ENCODE measurements at regions of chr16 and their contacts with region 1.

Region 1: GRCh38 chr16:67641779-67642708 is 2.9 kb upstream of the CARMIL2 start:
- DNase-seq: no peak
- ATAC-seq: no peak
- H3K4me3 Mint-ChIP-seq: no peak overlapping the region
- H3K27ac Mint-ChIP-seq: no peak overlapping the region
- H3K4me1 Mint-ChIP-seq: peaks cover 19% of the 10 kb centered on the region
- H3K27me3 Mint-ChIP-seq: no peaks in the 10 kb centered on the region

Region 2: GRCh38 chr16:67499106-67499505 is 142.9 kb before region 1 on chr16:
- CTCF ChIA-PET with region 1: interaction called, 10 read pairs
- POLR2A ChIA-PET with region 1: no interaction called
- DNase-seq: no peak
- ATAC-seq: no peak
- H3K4me3 Mint-ChIP-seq: no peak overlapping the region
- H3K27ac Mint-ChIP-seq: peak overlapping the region; percentile 34
- H3K4me1 Mint-ChIP-seq: peaks cover 13% of the 10 kb centered on the region
- H3K27me3 Mint-ChIP-seq: no peaks in the 10 kb centered on the region

Region 3: GRCh38 chr16:67555795-67556212 is 86.2 kb before region 1 on chr16:
- CTCF ChIA-PET with region 1: interaction called, 123 read pairs
- POLR2A ChIA-PET with region 1: interaction called, 51 read pairs
- DNase-seq: peak; percentile 52
- ATAC-seq: peak; percentile 91
- H3K4me3 Mint-ChIP-seq: peak overlapping the region; percentile 61
- H3K27ac Mint-ChIP-seq: peak overlapping the region; percentile 99
- H3K4me1 Mint-ChIP-seq: peaks cover 60% of the 10 kb centered on the region
- H3K27me3 Mint-ChIP-seq: no peaks in the 10 kb centered on the region

Region 4: DNA sequence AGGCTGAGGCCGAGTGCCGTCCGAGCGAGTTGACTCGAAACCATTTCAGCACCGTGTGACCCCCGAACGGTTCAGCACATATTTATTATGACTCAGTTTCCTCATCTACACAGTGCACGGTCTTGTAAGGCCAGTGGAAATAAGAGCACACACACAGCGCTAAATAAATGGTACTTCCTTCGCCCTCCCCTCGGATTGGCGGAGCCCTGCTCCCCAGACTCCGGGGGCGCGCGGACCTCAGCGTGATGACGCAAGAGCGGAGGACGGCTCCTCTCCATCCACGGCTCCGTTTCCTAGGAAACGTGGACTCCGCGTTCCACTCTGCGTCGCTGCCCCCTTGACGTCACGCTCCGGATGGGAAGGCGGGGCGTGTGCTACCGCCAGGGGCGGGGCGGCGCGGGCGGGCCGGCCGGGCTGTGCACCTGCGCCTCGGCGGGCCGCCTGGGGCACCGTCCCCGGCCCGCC is 18.6 kb after region 1 on chr16 and contains the start of gene PARD6A:
- CTCF ChIA-PET with region 1: interaction called, 30 read pairs
- POLR2A ChIA-PET with region 1: interaction called, 71 read pairs
- DNase-seq: peak; percentile 98
- ATAC-seq: peak; percentile 78
- H3K4me3 Mint-ChIP-seq: peak within 1 kb of the TSS; percentile 89
- H3K27ac Mint-ChIP-seq: peak within 1 kb of the TSS; percentile 96
- H3K4me1 Mint-ChIP-seq: peaks cover 31% of the 10 kb centered on the region
- H3K27me3 Mint-ChIP-seq: no peaks in the 10 kb centered on the region
- total RNA-seq, gene PARD6A: 13.2 to 14.7 TPM

Region 5: GRCh38 chr16:67736858-67737257 is 94.8 kb after region 1 on chr16:
- CTCF ChIA-PET with region 1: no interaction called
- POLR2A ChIA-PET with region 1: no interaction called
- DNase-seq: no peak
- ATAC-seq: no peak
- H3K4me3 Mint-ChIP-seq: no peak overlapping the region
- H3K27ac Mint-ChIP-seq: no peak overlapping the region
- H3K4me1 Mint-ChIP-seq: no peaks in the 10 kb centered on the region
- H3K27me3 Mint-ChIP-seq: no peaks in the 10 kb centered on the region